IMR-90 (cell line): ENCODE measurements at regions of chr3 and their contacts with region 1.

Region 1: DNA sequence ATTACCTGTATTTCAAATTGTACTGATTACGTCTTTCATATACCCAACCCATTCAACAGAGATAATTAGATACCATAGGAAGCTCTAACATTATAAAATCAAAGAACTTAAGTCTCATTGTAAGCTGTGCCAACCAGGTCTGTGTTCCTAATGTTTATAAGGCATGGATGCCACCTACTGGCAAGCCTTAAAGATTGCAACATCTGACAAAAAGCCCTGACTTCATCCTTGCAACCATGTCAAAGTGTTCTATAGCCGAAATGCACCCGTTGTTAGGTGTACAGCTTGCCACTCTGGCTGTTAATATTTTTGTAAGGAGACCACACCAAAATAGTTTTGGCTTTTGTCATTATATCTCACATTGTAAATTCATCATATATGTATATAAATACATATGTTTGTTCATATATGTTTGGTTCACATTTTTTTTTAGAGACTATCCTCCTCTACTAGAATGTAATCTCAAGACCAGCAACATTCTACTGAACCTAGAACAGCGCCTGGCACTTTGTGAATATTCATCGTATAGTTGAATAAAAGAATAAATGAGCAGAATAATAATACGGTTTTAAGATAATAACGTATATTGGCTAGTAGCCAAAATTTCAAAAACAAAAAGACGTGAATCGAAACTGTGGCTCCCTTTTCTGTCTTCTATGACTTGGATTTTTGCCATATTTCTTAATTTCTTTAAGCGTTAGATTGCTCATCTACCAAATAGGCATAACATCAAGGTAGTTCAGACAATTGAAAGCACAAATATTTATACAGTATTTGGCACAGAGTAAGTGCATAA is 258.1 kb downstream of the TBL1XR1 start:
- DNase-seq: peak; percentile 86
- ATAC-seq: peak; percentile 90
- H3K4me3 ChIP-seq: no peak overlapping the region
- H3K27ac ChIP-seq: no peak overlapping the region
- H3K4me1 ChIP-seq: no peaks in the 10 kb centered on the region
- H3K27me3 ChIP-seq: no peaks in the 10 kb centered on the region
- CTCF ChIP-seq: peak; percentile 87
- POLR2A ChIP-seq: no peak
- RAD21 ChIP-seq: peak; percentile 85

Region 2: GRCh38 chr3:176514297-176514696 is 424.9 kb before region 1 on chr3:
- CTCF ChIA-PET with region 1: interaction called, 8 read pairs
- POLR2A ChIA-PET with region 1: no interaction called
- dilution Hi-C with region 1: no loop called
- in situ Hi-C with region 1: no loop called
- intact Hi-C with region 1: loop called (anchors 1 kb)
- DNase-seq: peak; percentile 42
- ATAC-seq: no peak; the same call in 1 of the 2 replicates
- H3K4me3 ChIP-seq: no peak overlapping the region
- H3K27ac ChIP-seq: no peak overlapping the region
- H3K4me1 ChIP-seq: no peaks in the 10 kb centered on the region
- H3K27me3 ChIP-seq: no peaks in the 10 kb centered on the region
- CTCF ChIP-seq: peak; percentile 54
- POLR2A ChIP-seq: no peak
- RAD21 ChIP-seq: peak; percentile 66

Region 3: GRCh38 chr3:176663837-176664831 is 275.1 kb before region 1 on chr3:
- CTCF ChIA-PET with region 1: no interaction called
- POLR2A ChIA-PET with region 1: no interaction called
- dilution Hi-C with region 1: no loop called
- in situ Hi-C with region 1: no loop called
- intact Hi-C with region 1: loop called (anchors 10 kb)
- DNase-seq: peak; percentile 66
- ATAC-seq: peak; percentile 89
- H3K4me3 ChIP-seq: no peak overlapping the region
- H3K27ac ChIP-seq: no peak overlapping the region
- H3K4me1 ChIP-seq: 0 out of 2 replicates have a peak, but pooled peaks cover 1% of the 10 kb centered on the region
- H3K27me3 ChIP-seq: no peaks in the 10 kb centered on the region
- CTCF ChIP-seq: peak; percentile 43
- POLR2A ChIP-seq: no peak
- RAD21 ChIP-seq: peak; percentile 52

Region 4: GRCh38 chr3:176872771-176873209 is 66.4 kb before region 1 on chr3:
- CTCF ChIA-PET with region 1: interaction called, 12 read pairs
- POLR2A ChIA-PET with region 1: no interaction called
- dilution Hi-C with region 1: no loop called
- in situ Hi-C with region 1: loop called (anchors 5 kb)
- intact Hi-C with region 1: loop called (anchors 1 kb)
- DNase-seq: peak; percentile 56
- ATAC-seq: peak; percentile 87
- H3K4me3 ChIP-seq: no peak overlapping the region
- H3K27ac ChIP-seq: no peak overlapping the region
- H3K4me1 ChIP-seq: no peaks in the 10 kb centered on the region
- H3K27me3 ChIP-seq: peaks cover 3% of the 10 kb centered on the region; the same call in 1 of the 2 replicates
- CTCF ChIP-seq: peak; percentile 76
- POLR2A ChIP-seq: no peak
- RAD21 ChIP-seq: peak; percentile 66